MCF 10A (cell line): ENCODE measurements at regions of chr2 and their contacts with region 1.

Region 1: DNA sequence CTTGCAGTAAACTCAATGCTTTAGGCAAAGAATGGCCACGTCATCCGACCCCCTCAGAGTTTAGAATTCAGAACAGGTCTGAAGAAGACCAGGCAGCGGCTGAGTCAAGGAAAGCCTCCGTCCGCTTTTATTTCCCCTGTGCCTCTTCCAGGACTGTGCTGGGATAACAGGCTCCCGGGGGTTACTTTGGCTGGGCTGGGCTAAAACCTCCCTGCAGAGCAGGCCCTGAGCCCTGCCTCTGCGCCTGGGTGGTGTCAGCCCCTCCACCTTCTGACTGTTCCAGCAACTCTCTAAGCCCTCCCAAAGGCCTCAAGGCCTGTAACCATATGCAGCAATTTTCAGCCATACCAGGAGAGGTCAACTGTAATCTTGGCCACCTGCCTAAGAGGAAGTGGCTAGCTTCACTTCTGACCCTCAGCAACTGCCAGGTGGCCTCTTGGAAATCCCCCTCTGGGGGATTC is 166.5 kb downstream of the RPIA start:
- DNase-seq: no peak
- H3K4me3 Mint-ChIP-seq: no peak overlapping the region
- H3K27ac Mint-ChIP-seq: no peak overlapping the region
- H3K4me1 Mint-ChIP-seq: no peaks in the 10 kb centered on the region
- H3K27me3 Mint-ChIP-seq: peaks cover 65% of the 10 kb centered on the region
- CTCF ChIP-seq: no peak

Region 2: GRCh38 chr2:88874063-88874657 is 16.2 kb after region 1 on chr2:
- CTCF ChIA-PET with region 1: interaction called, 14 read pairs
- POLR2A ChIA-PET with region 1: no interaction called
- intact Hi-C with region 1: no loop called
- DNase-seq: peak; percentile 73
- H3K4me3 Mint-ChIP-seq: no peak overlapping the region
- H3K27ac Mint-ChIP-seq: no peak overlapping the region
- H3K4me1 Mint-ChIP-seq: no peaks in the 10 kb centered on the region
- H3K27me3 Mint-ChIP-seq: peaks cover 86% of the 10 kb centered on the region
- CTCF ChIP-seq: peak; percentile 77